CD4-positive, alpha-beta T cell (primary cell): ENCODE measurements at regions of chr12 and their contacts with region 1.

Region 1: DNA sequence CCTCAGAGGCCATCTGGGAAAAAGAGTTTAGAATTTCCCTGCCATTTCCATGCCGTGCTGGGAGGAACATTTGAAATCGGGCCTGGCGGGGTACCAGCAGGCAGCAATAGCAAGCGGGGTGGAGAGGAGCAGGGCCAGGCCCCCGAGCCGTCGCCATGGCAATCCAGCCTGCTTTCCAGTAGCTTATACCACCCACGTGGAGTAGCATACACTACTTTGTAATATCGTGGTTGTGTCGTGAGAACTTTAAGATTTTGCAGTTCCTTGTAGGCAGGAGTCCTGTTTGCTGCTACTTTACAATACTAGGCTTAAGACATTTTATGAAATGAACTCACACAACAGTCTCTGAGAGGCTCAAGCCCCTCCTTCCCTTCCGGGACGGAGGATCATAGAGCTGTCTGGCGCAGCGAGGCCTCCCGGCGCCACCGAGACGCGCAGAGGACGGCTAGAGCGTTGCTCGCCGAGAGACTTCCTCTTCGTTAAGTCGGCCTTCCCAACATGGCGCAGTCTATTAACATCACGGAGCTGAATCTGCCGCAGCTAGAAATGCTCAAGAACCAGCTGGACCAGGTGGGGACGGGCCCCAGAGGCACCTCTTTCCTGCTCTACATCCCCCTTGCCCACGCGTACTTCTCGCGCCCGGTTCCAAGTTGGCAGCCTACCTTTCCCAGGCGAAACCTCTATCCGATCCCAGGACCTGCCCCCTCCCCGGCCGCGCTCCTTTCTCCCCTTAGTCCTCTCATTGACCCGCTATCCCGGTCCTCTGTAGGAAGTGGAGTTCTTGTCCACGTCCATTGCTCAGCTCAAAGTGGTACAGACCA is at the start of gene PFDN5:
- DNase-seq: peak; percentile 76 to 96 (median 86)
- ATAC-seq: peak; percentile 92
- H3K4me3 ChIP-seq: peak within 1 kb of the TSS; percentile 69
- H3K4me3 Mint-ChIP-seq: peak within 1 kb of the TSS; percentile 99
- H3K27ac ChIP-seq: peak within 1 kb of the TSS; percentile 69 to 71
- H3K27ac Mint-ChIP-seq: peak within 1 kb of the TSS; percentile 97
- H3K4me1 ChIP-seq: peaks cover 38% of the 10 kb centered on the region
- H3K4me1 Mint-ChIP-seq: peaks cover 50% of the 10 kb centered on the region
- H3K27me3 ChIP-seq: no peaks in the 10 kb centered on the region
- H3K27me3 Mint-ChIP-seq: no peaks in the 10 kb centered on the region
- CTCF ChIP-seq: no peak
- total RNA-seq, gene PFDN5: 757 to 763 TPM

Region 2: GRCh38 chr12:53005986-53006809 is 289.1 kb before region 1 on chr12 and contains the start of gene EIF4B:
- CTCF ChIA-PET with region 1: no interaction called
- POLR2A ChIA-PET with region 1: interaction called, 5 read pairs
- intact Hi-C with region 1: loop called in 1 of 2 experiments (anchors 5 kb)
- DNase-seq: peak; percentile 98 to 100 (median 99)
- ATAC-seq: peak; percentile 85
- H3K4me3 ChIP-seq: peak within 1 kb of the TSS; percentile 100
- H3K4me3 Mint-ChIP-seq: peak within 1 kb of the TSS; percentile 99
- H3K27ac ChIP-seq: peak within 1 kb of the TSS; percentile 90 to 97
- H3K27ac Mint-ChIP-seq: peak within 1 kb of the TSS; percentile 99
- H3K4me1 ChIP-seq: peaks cover 50% of the 10 kb centered on the region
- H3K4me1 Mint-ChIP-seq: peaks cover 57% of the 10 kb centered on the region
- H3K27me3 ChIP-seq: no peaks in the 10 kb centered on the region
- H3K27me3 Mint-ChIP-seq: no peaks in the 10 kb centered on the region
- CTCF ChIP-seq: no peak
- total RNA-seq, gene EIF4B: 794 to 806 TPM

Region 3: DNA sequence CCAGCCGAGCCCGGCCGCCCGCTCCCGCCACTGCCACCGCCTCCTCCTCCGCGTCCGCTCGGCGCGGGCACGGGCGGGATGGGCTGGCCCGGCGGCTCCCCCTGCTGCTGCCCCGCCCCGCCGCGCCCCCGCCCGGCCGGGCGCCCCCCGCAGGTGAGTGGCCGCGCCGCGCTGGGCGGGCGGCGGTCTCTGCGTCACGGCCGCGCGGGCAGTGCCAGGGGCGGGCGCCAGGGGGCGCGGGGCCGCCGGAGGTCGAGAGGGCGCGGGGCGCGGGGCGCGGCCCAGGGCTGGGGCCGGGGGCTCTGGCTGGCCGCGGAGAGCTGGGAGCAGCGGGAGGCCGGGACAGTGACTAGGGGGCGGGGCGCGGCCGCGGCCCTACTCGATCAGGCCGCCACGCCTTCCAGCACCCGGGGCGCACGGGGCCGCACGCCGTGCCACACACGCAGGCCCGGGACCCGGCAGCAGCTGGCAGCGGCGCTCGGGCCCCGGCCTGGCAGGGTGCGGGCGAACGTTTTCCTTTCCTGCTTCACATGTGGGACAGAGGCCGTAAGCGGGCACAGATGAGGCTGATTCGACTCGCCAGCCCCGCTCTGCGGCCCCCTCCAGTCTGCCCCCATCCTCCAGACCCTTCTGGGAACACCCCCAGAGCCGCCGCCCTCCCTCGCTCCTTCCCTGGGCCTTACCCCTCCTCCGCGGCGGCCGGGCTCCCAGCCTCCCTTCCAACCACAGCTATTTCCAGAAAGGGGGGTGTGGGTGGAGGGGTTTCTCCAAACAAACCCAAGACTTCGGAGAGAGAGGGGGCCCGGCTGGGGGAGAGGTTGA is 247.8 kb before region 1 on chr12:
- CTCF ChIA-PET with region 1: no interaction called
- POLR2A ChIA-PET with region 1: no interaction called
- intact Hi-C with region 1: no loop called
- DNase-seq: peak; percentile 45 to 90 (median 64)
- ATAC-seq: peak; percentile 79
- H3K4me3 ChIP-seq: peak overlapping the region; percentile 93
- H3K4me3 Mint-ChIP-seq: peak overlapping the region; percentile 76
- H3K27ac ChIP-seq: peak overlapping the region; percentile 56 to 76
- H3K27ac Mint-ChIP-seq: peak overlapping the region; percentile 96
- H3K4me1 ChIP-seq: peaks cover 21% of the 10 kb centered on the region
- H3K4me1 Mint-ChIP-seq: peaks cover 25% of the 10 kb centered on the region
- H3K27me3 ChIP-seq: no peaks in the 10 kb centered on the region
- H3K27me3 Mint-ChIP-seq: no peaks in the 10 kb centered on the region
- CTCF ChIP-seq: no peak

Region 4: GRCh38 chr12:53180220-53180930 is 114.9 kb before region 1 on chr12 and contains the starts of genes CSAD and ZNF740:
- CTCF ChIA-PET with region 1: interaction called, 3 read pairs
- POLR2A ChIA-PET with region 1: interaction called, 20 read pairs
- intact Hi-C with region 1: no loop called
- DNase-seq: peak; percentile 92 to 99 (median 97)
- ATAC-seq: peak; percentile 93
- H3K4me3 ChIP-seq: peak within 1 kb of the TSS; percentile 94
- H3K4me3 Mint-ChIP-seq: peak within 1 kb of the TSS; percentile 98
- H3K27ac ChIP-seq: peak within 1 kb of the TSS; percentile 87 to 92
- H3K27ac Mint-ChIP-seq: peak within 1 kb of the TSS; percentile 94
- H3K4me1 ChIP-seq: peaks cover 52% of the 10 kb centered on the region
- H3K4me1 Mint-ChIP-seq: peaks cover 57% of the 10 kb centered on the region
- H3K27me3 ChIP-seq: no peaks in the 10 kb centered on the region
- H3K27me3 Mint-ChIP-seq: no peaks in the 10 kb centered on the region
- CTCF ChIP-seq: no peak
- total RNA-seq, gene CSAD: 56.7 to 57.3 TPM
- total RNA-seq, gene ZNF740: 24.4 to 24.7 TPM

Region 5: GRCh38 chr12:53213348-53213747 is 81.9 kb before region 1 on chr12:
- CTCF ChIA-PET with region 1: interaction called, 8 read pairs
- POLR2A ChIA-PET with region 1: interaction called, 10 read pairs
- intact Hi-C with region 1: loop called in 1 of 2 experiments (anchors 2 kb)
- DNase-seq: peak; percentile 76 to 92 (median 82)
- ATAC-seq: peak; percentile 75
- H3K4me3 ChIP-seq: no peak overlapping the region
- H3K4me3 Mint-ChIP-seq: peak overlapping the region; percentile 61
- H3K27ac ChIP-seq: no peak overlapping the region
- H3K27ac Mint-ChIP-seq: peak overlapping the region; percentile 64
- H3K4me1 ChIP-seq: peaks cover 81% of the 10 kb centered on the region
- H3K4me1 Mint-ChIP-seq: peaks cover 68% of the 10 kb centered on the region
- H3K27me3 ChIP-seq: no peaks in the 10 kb centered on the region
- H3K27me3 Mint-ChIP-seq: no peaks in the 10 kb centered on the region
- CTCF ChIP-seq: peak; percentile 93

Region 6: GRCh38 chr12:53267999-53268647 is 27.2 kb before region 1 on chr12 and contains the start of gene ESPL1:
- CTCF ChIA-PET with region 1: interaction called, 4 read pairs
- POLR2A ChIA-PET with region 1: interaction called, 10 read pairs
- intact Hi-C with region 1: no loop called
- DNase-seq: peak; percentile 55 to 93 (median 74)
- ATAC-seq: peak; percentile 91
- H3K4me3 ChIP-seq: peak within 1 kb of the TSS; percentile 86
- H3K4me3 Mint-ChIP-seq: peak within 1 kb of the TSS; percentile 95
- H3K27ac ChIP-seq: peak within 1 kb of the TSS; percentile 40 to 50
- H3K27ac Mint-ChIP-seq: peak within 1 kb of the TSS; percentile 82
- H3K4me1 ChIP-seq: peaks cover 18% of the 10 kb centered on the region
- H3K4me1 Mint-ChIP-seq: peaks cover 19% of the 10 kb centered on the region
- H3K27me3 ChIP-seq: no peaks in the 10 kb centered on the region
- H3K27me3 Mint-ChIP-seq: no peaks in the 10 kb centered on the region
- CTCF ChIP-seq: peak; percentile 36
- total RNA-seq, gene ESPL1: 0.20 to 0.71 TPM

Region 7: DNA sequence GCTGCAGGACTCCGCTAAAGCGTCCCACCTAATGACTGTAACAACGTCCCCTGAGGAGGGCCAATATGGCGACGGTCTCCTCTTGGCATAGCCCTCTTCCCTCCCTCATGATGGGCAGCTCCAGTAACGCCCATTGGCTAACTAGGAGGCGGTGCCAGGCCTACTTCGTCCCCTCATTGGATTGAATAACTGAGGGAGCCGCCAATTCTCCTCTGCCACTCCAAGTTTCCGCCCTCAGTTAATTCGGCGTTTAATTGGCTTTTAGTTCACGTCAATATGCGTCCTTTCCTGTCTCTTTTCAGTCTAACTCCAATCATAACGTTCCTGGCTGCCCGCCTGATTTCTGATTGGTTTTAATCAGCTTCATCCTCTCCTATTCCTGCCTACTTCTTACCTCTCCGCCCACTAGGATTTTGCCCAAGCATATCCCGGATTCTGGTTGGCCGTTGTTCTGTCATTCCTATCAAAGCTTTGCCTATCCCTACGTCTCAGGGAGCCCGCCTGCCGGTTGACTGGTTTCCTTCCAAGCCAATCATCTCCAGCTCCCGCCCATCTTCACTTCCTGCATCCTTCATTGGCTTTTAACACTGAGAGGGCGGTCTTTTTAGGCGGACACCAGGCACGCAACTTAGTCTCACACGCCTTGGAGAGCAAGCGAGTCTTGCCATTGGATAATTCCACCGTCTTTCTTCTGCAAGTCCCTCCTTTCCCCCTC is 84.3 kb after region 1 on chr12:
- CTCF ChIA-PET with region 1: no interaction called
- POLR2A ChIA-PET with region 1: interaction called, 12 read pairs
- intact Hi-C with region 1: no loop called
- DNase-seq: peak in 12 of 14 experiments; percentile 80 to 100 (median 92)
- ATAC-seq: peak; percentile 76
- H3K4me3 ChIP-seq: peak overlapping the region; percentile 63
- H3K4me3 Mint-ChIP-seq: no peak overlapping the region
- H3K27ac ChIP-seq: peak overlapping the region; percentile 67 to 75
- H3K27ac Mint-ChIP-seq: no peak overlapping the region
- H3K4me1 ChIP-seq: peaks cover 52% of the 10 kb centered on the region
- H3K4me1 Mint-ChIP-seq: peaks cover 31% of the 10 kb centered on the region
- H3K27me3 ChIP-seq: no peaks in the 10 kb centered on the region
- H3K27me3 Mint-ChIP-seq: no peaks in the 10 kb centered on the region
- CTCF ChIP-seq: no peak

Region 8: DNA sequence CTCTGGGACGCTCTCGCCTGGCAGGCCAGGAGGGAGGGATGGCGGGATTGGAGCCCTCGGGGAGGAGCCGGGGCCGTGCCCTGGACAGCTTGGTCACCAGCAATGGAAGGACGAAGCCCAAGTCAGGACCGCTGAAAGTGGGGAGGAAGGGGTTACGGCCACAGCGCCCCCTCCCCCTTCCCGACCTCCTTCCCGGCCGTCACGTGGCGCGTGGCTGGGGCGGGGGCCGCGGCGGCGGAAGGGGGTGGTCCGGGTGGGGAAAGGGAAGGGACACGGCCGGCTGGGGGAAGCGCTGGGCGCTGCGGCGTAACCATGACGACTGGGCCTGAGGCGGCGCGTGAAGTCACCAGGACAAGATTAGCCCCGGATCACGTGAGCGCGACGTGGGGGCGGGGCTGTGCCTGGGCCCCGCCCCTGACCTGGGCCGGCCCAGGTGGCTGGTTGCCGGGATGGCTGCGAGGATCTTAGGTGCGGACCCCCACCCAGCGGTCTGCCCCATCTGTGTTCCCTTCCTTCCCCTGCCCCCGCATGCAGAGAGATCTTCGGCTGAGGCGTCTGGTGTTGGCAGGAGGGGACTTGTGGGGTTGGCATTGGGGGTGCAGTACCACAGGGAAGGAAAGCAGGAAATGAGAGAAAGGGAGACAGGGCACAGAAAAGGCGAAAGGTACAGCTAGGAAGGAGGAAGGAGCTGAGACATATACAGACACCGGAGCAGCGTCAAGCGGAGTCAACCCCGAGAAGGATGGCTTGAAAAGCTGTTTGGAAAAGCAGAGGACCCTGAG is 197.7 kb after region 1 on chr12:
- CTCF ChIA-PET with region 1: no interaction called
- POLR2A ChIA-PET with region 1: no interaction called
- intact Hi-C with region 1: no loop called
- DNase-seq: peak; percentile 69 to 94 (median 82)
- ATAC-seq: peak; percentile 89
- H3K4me3 ChIP-seq: peak overlapping the region; percentile 69
- H3K4me3 Mint-ChIP-seq: peak overlapping the region; percentile 92
- H3K27ac ChIP-seq: peak overlapping the region; percentile 69 to 94
- H3K27ac Mint-ChIP-seq: peak overlapping the region; percentile 92
- H3K4me1 ChIP-seq: peaks cover 29% of the 10 kb centered on the region
- H3K4me1 Mint-ChIP-seq: peaks cover 50% of the 10 kb centered on the region
- H3K27me3 ChIP-seq: no peaks in the 10 kb centered on the region
- H3K27me3 Mint-ChIP-seq: no peaks in the 10 kb centered on the region
- CTCF ChIP-seq: no peak